ENCODE measurements at regions of chr15 and their contacts with region 1.

Region 1: DNA sequence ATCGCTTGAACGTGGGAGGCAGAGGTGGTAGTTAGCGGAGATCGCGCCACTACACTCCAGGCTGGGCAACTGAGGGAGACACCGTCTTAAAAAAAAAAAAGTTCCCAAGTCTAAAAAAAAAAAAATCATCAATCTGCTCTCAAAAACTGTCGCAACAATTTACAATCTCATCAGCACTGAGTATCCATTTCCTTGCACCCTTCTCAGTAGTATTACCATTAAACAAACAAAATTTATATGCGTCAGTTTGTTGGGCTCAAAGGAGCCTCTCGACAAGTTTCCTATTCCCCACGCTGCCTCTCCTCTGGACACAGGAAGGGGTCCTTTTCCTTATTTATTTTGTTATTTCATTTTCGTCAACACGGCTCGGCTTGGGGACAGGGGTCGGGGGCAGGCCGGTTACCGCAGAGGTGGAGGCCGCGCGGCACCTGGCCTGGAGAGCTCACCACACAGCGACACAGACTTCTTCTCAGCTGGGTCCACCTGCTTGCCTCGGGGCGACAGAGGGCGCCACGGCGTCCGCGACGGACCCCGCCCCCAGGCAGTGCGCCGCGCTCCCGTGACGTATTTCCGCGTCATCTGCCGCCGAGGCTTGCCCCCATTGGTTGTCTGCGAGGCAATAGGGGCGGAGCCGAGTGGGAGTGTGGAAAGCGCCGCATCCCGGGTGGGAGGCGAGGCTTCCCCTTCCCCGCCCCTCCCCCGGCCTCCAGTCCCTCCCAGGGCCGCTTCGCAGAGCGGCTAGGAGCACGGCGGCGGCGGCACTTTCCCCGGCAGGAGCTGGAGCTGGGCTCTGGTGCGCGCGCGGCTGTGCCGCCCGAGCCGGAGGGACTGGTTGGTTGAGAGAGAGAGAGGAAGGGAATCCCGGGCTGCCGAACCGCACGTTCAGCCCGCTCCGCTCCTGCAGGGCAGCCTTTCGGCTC is at the start of gene MAP2K1:
- DNase-seq: peak; percentile 98 to 99 (median 98)
- ATAC-seq: peak; percentile 94
- H3K4me3 ChIP-seq: peak within 1 kb of the TSS; percentile 86
- H3K27ac ChIP-seq: peak within 1 kb of the TSS; percentile 80
- H3K4me1 ChIP-seq: peaks cover 18 to 22% of the 10 kb centered on the region in 2 experiments; a peak in 3 of 5 replicates
- H3K27me3 ChIP-seq: no peaks in the 10 kb centered on the region
- CTCF ChIP-seq: peak; percentile 69 to 82 (median 77)
- EP300 ChIP-seq: peak; percentile 41; the same call in 1 of the 2 replicates
- POLR2A ChIP-seq: peak; percentile 91
- RAD21 ChIP-seq: peak in 1 of 2 experiments; percentile 50; a peak in 2 of 4 replicates
- polyA plus RNA-seq, gene MAP2K1: 7.5 to 10.9 TPM

Region 2: DNA sequence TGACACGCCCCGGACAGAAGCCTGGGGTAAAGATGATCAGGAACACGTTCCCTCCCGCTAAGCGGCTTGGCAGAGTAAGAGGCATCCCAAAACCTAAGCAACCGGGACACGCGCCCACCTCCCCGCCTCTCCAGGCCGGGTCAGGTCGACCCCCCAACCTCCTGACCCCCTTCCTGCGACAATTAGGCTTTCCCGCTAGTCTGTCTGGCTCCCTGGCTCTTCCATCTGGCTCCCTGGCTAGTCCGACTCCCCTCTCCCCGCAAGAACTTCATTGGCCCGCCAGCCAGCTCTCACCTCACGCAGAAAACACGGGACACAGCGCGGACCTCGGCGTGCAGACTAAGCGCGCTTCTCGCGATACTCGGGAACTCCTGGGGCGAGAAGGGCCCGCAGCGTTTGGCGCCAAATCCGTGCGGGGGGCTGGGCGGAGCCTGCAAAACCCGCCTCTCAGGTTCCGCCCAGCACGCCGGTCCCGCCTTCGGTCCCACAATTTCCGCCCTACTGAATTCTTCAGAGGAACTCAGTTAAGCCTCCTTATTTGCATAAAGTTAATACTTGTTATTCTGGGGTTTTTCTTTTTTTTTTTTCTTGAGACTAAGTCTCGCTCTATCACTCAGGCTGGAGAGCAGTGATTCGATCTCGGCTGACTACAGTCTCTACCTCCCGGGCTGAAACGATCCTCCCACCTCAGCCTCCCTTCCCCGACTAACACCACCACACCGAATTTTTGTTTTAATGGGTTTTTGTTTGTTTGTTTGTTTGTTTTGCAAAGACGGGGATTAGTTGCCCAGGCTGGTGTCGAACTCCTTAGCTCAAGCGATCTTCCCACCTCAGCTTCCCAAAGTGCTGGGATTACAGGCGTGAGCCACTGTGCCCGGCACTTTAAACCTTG is 29.9 kb before region 1 on chr15 and contains the start of gene TIPIN:
- CTCF ChIA-PET with region 1: no interaction called
- POLR2A ChIA-PET with region 1: interaction called, 7 read pairs
- in situ Hi-C with region 1: no loop called
- intact Hi-C with region 1: loop called (anchors 2 kb)
- DNase-seq: peak; percentile 94 to 98 (median 95)
- ATAC-seq: peak; percentile 98
- H3K4me3 ChIP-seq: peak within 1 kb of the TSS; percentile 69
- H3K27ac ChIP-seq: peak within 1 kb of the TSS; percentile 92
- H3K4me1 ChIP-seq: peaks cover 7 to 17% of the 10 kb centered on the region in 2 experiments; a peak in 4 of 5 replicates
- H3K27me3 ChIP-seq: no peaks in the 10 kb centered on the region
- CTCF ChIP-seq: peak in 1 of 3 experiments; percentile 47; a peak in 2 of 6 replicates
- EP300 ChIP-seq: no peak
- POLR2A ChIP-seq: peak; percentile 98
- RAD21 ChIP-seq: no peak
- polyA plus RNA-seq, gene TIPIN: 55.6 to 58.9 TPM

Region 3: GRCh38 chr15:66404532-66404931 is 18.1 kb after region 1 on chr15:
- CTCF ChIA-PET with region 1: no interaction called
- POLR2A ChIA-PET with region 1: interaction called, 11 read pairs
- in situ Hi-C with region 1: no loop called
- intact Hi-C with region 1: no loop called
- DNase-seq: peak in 2 of 4 experiments; percentile 37
- ATAC-seq: no peak
- H3K4me3 ChIP-seq: no peak overlapping the region
- H3K27ac ChIP-seq: no peak overlapping the region
- H3K4me1 ChIP-seq: peaks cover 7 to 18% of the 10 kb centered on the region in 2 experiments; a peak in 4 of 5 replicates
- H3K27me3 ChIP-seq: no peaks in the 10 kb centered on the region
- CTCF ChIP-seq: no peak
- EP300 ChIP-seq: no peak
- POLR2A ChIP-seq: no peak
- RAD21 ChIP-seq: no peak

Region 4: DNA sequence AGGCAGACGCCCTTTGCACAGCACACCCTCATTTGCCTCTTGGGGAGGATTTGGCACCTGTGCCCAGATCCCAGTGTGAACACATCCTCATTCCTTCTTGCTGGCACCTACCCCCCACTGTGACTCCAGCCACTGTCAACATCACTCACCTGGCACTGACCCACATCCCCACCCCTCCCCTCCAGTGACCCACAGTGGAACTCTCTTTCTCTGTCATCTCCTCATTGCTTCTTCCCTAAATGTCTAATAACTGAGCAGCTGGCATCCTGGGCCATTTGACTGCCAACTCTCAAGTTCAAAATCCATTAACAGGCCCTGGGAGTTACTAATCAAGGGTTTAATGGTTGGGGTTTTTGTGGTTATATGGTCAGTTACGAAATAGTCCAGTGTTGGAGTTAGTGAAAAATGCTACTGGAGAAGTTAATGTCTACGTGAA is 96.7 kb after region 1 on chr15:
- CTCF ChIA-PET with region 1: no interaction called
- POLR2A ChIA-PET with region 1: interaction called, 3 read pairs
- in situ Hi-C with region 1: loop called (anchors 5 kb)
- intact Hi-C with region 1: no loop called
- DNase-seq: peak in 1 of 4 experiments; percentile 4
- ATAC-seq: no peak
- H3K4me3 ChIP-seq: no peak overlapping the region
- H3K27ac ChIP-seq: no peak overlapping the region
- H3K4me1 ChIP-seq: peaks cover 9 to 13% of the 10 kb centered on the region in 2 experiments; a peak in 3 of 5 replicates
- H3K27me3 ChIP-seq: no peaks in the 10 kb centered on the region
- CTCF ChIP-seq: no peak
- EP300 ChIP-seq: no peak
- POLR2A ChIP-seq: no peak
- RAD21 ChIP-seq: no peak

Region 5: GRCh38 chr15:66497502-66498455 is 111.3 kb after region 1 on chr15 and contains the start of gene SNAPC5:
- CTCF ChIA-PET with region 1: interaction called, 4 read pairs
- POLR2A ChIA-PET with region 1: interaction called, 6 read pairs
- in situ Hi-C with region 1: no loop called
- intact Hi-C with region 1: loop called (anchors 1 kb)
- DNase-seq: peak; percentile 84 to 97 (median 88)
- ATAC-seq: peak; percentile 92
- H3K4me3 ChIP-seq: peak within 1 kb of the TSS; percentile 83
- H3K27ac ChIP-seq: peak within 1 kb of the TSS; percentile 93
- H3K4me1 ChIP-seq: peaks cover 5 to 13% of the 10 kb centered on the region in 2 experiments
- H3K27me3 ChIP-seq: no peaks in the 10 kb centered on the region
- CTCF ChIP-seq: peak; percentile 83 to 99 (median 94)
- EP300 ChIP-seq: peak; percentile 51; the same call in 1 of the 2 replicates
- POLR2A ChIP-seq: peak; percentile 87
- RAD21 ChIP-seq: peak; percentile 53 to 70
- polyA plus RNA-seq, gene SNAPC5: 155 TPM

Measured in K562 (cell line).